Colonic mucosa (tissue), 4 donors: ENCODE measurements at regions of chr18 and their contacts with region 1.

Region 1: DNA sequence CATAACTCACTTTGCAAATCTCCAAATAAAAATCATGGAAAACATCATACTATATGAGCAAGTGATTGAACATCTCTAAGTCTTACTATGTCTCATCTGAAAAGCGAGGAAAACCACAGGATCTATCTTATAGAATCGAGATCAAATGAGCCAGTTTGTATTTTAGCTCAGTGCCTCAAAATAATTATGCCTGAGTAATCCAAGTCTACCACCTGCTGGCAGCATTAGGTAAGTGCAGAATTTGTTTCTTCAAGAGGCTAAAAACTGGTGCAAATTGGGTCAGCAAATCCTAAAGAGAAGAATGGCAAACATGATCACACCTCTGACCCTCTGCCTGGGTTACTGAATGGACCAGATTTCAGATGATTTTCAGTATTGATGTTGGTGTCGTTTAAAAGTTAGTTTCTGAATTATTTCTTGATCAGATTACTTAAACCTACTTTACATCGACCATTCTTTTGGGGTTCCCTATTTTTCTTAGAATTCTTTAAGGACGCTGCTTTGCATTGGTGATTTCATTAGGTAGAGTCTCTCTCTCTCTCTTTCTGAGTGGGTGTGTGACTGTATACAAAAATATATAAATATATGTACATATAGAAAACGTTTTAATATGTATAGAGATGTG is 12.7 kb upstream of the FHOD3 start:
- DNase-seq: peak; percentile 43
- H3K4me3 ChIP-seq: no peak overlapping the region
- H3K27ac ChIP-seq: no peak overlapping the region
- H3K4me1 ChIP-seq: no peaks in the 10 kb centered on the region
- H3K27me3 ChIP-seq: no peaks in the 10 kb centered on the region
- CTCF ChIP-seq: peak; percentile 91

Region 2: GRCh38 chr18:35756506-35757117 is 528.2 kb before region 1 on chr18:
- intact Hi-C with region 1: loop called (anchors 10 kb)
- DNase-seq: peak; percentile 55
- H3K4me3 ChIP-seq: no peak overlapping the region
- H3K27ac ChIP-seq: no peak overlapping the region
- H3K4me1 ChIP-seq: no peaks in the 10 kb centered on the region
- H3K27me3 ChIP-seq: no peaks in the 10 kb centered on the region
- CTCF ChIP-seq: peak; percentile 68

Region 3: DNA sequence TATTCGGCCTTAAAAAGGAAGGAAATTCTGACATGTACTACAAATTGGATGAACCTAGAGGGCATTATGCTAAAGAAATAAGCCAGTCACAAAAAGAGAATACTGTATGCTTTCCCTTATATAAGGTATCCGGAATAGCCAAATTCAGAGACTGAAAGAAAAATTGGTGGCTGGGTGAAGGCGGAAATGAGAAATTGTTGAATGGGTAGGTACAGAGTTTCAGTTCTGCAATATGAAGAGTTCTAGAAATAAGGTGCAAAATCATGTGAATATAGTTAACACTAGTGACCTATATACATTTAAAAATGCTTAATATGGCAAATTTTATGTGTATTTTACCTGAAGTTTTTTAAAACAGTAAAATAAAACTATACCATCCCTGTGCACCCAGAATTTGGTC is 269.2 kb before region 1 on chr18:
- intact Hi-C with region 1: loop called (anchors 5 kb)
- DNase-seq: no peak
- H3K4me3 ChIP-seq: no peak overlapping the region
- H3K27ac ChIP-seq: no peak overlapping the region
- H3K4me1 ChIP-seq: no peaks in the 10 kb centered on the region
- H3K27me3 ChIP-seq: no peaks in the 10 kb centered on the region
- CTCF ChIP-seq: no peak

Region 4: GRCh38 chr18:36095936-36096519 is 188.8 kb before region 1 on chr18:
- intact Hi-C with region 1: loop called (anchors 2 kb)
- DNase-seq: no peak
- H3K4me3 ChIP-seq: no peak overlapping the region
- H3K27ac ChIP-seq: no peak overlapping the region
- H3K4me1 ChIP-seq: no peaks in the 10 kb centered on the region
- H3K27me3 ChIP-seq: no peaks in the 10 kb centered on the region
- CTCF ChIP-seq: peak; percentile 37

Region 5: GRCh38 chr18:36186911-36187834 is 97.6 kb before region 1 on chr18 and contains the start of gene MOCOS:
- intact Hi-C with region 1: loop called (anchors 10 kb)
- DNase-seq: peak; percentile 93
- H3K4me3 ChIP-seq: peak within 1 kb of the TSS; percentile 83
- H3K27ac ChIP-seq: peak within 1 kb of the TSS; percentile 65
- H3K4me1 ChIP-seq: no peaks in the 10 kb centered on the region
- H3K27me3 ChIP-seq: no peaks in the 10 kb centered on the region
- CTCF ChIP-seq: no peak
- total RNA-seq, gene MOCOS: 6.8 to 10.0 TPM